Endothelial cell of umbilical vein (primary cell): ENCODE measurements at regions of chr21 and their contacts with region 1.

Region 1: GRCh38 chr21:14773777-14774345 is 227.7 kb upstream of the SAMSN1 start:
- DNase-seq: peak; percentile 53
- H3K4me3 ChIP-seq: no peak overlapping the region
- H3K27ac ChIP-seq: no peak overlapping the region
- H3K4me1 ChIP-seq: no peaks in the 10 kb centered on the region
- H3K27me3 ChIP-seq: no peaks in the 10 kb centered on the region
- CTCF ChIP-seq: peak; percentile 61 to 65
- POLR2A ChIP-seq: no peak

Region 2: GRCh38 chr21:14058566-14058965 is 715.3 kb before region 1 on chr21:
- CTCF ChIA-PET with region 1: no interaction called
- POLR2A ChIA-PET with region 1: no interaction called
- dilution Hi-C with region 1: no loop called
- intact Hi-C with region 1: no loop called
- DNase-seq: no peak
- H3K4me3 ChIP-seq: no peak overlapping the region
- H3K27ac ChIP-seq: no peak overlapping the region
- H3K4me1 ChIP-seq: no peaks in the 10 kb centered on the region
- H3K27me3 ChIP-seq: no peaks in the 10 kb centered on the region
- CTCF ChIP-seq: no peak
- POLR2A ChIP-seq: no peak

Region 3: DNA sequence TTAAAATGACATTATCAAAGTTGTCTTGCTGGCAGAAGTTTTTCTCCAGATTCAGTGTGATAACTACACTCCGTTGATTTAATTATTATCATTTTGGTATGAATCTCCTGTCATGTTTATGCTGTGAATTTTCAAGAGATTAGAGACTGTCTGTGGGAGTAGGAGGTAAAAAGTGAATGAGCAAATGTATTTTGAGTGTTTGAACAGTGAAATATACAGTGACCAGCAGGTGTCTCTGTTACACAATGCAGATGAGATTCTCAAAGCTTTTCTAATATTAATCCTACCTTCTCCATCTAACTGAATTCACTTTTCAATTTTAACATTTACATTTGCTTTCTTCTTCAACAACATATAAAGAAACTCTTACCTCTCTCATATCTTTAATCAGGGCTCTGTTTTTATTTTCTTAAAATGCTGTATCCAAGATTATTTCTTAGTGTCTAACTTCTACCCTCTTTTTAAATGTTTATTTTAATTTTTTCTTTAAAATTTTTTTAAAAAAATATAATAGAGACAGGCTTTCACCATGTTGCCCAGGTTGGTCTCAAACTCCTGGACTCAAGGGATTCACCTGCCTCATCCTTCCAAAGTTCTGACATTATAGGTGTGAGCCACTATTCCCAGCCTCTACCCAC is 370.1 kb before region 1 on chr21:
- CTCF ChIA-PET with region 1: interaction called, 15 read pairs
- POLR2A ChIA-PET with region 1: no interaction called
- dilution Hi-C with region 1: no loop called
- intact Hi-C with region 1: loop called (anchors 5 kb)
- DNase-seq: peak; percentile 45
- H3K4me3 ChIP-seq: no peak overlapping the region
- H3K27ac ChIP-seq: no peak overlapping the region
- H3K4me1 ChIP-seq: no peaks in the 10 kb centered on the region
- H3K27me3 ChIP-seq: no peaks in the 10 kb centered on the region
- CTCF ChIP-seq: peak; percentile 33 to 49
- POLR2A ChIP-seq: no peak

Region 4: DNA sequence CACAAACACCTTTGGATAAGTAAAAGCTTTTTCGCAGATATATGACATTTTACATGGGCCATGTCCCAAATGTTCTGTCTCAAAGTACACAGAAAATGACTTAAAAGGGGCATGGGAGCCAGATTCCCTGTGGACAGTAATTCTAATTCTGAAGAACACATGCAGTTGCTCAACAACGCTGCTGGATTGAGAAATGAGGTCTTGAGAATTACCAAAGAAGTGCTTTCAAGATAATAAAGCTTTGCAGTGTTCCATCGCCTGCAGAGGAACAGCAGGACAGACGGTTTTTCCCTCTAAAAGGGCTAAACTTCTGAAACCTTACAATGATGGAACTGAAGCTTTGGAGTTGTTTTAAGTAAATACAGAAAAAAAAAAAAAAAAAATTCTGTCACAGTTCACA is 335.6 kb before region 1 on chr21:
- CTCF ChIA-PET with region 1: interaction called, 4 read pairs
- POLR2A ChIA-PET with region 1: no interaction called
- dilution Hi-C with region 1: no loop called
- intact Hi-C with region 1: loop called (anchors 5 kb)
- DNase-seq: no peak
- H3K4me3 ChIP-seq: no peak overlapping the region
- H3K27ac ChIP-seq: no peak overlapping the region
- H3K4me1 ChIP-seq: no peaks in the 10 kb centered on the region
- H3K27me3 ChIP-seq: no peaks in the 10 kb centered on the region
- CTCF ChIP-seq: no peak
- POLR2A ChIP-seq: no peak

Region 5: DNA sequence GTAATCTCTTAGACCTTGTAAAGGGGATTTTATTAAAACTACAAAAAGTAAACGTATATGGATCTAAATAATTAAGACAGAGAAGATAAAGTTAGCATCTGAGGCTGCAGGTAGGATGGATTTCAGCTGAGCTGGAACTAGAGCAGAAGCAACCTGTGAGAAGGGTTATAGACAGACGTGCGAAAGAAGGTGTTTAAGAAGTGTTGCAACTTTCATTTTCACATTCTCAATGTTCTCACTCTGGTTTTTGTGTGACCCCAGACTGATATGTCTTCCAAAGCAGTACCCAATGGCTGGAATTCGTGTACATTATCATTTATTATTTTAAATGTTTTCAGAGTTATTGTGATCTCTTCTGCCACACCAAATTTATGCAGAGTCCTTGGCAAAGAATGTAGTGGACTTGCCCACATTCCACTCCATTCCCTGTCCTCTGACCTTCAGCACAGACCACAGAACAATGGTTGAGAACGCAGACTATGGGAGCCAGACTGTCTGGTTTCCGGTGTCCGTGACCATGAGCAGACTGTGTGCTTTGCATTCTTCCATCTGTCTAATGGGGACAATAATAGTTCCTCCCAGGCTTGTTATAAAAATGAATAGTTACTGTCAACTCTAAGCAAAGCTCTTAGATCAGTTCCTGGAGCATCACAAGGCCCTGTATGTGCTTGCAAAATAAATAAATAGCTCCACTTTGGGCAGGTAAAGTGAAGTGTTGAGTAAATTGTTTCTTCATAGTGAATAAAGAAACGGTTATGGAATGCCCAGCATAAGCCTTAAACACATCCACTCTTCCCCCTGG is 87.2 kb before region 1 on chr21:
- CTCF ChIA-PET with region 1: no interaction called
- POLR2A ChIA-PET with region 1: no interaction called
- dilution Hi-C with region 1: no loop called
- intact Hi-C with region 1: no loop called
- DNase-seq: no peak
- H3K4me3 ChIP-seq: no peak overlapping the region
- H3K27ac ChIP-seq: no peak overlapping the region
- H3K4me1 ChIP-seq: peaks cover 10% of the 10 kb centered on the region
- H3K27me3 ChIP-seq: no peaks in the 10 kb centered on the region
- CTCF ChIP-seq: no peak
- POLR2A ChIP-seq: no peak